Spleen (tissue), 13 donors: ENCODE measurements at regions of chr13 and their contacts with region 1.

Region 1: GRCh38 chr13:80363890-80364503 is 23.1 kb upstream of the SPRY2 start:
- DNase-seq: no peak
- H3K4me3 ChIP-seq: peak overlapping the region in 1 of 8 donors; percentile 13
- H3K27ac ChIP-seq: no peak overlapping the region
- H3K4me1 ChIP-seq: peaks cover 0 to 50% (median 27%) of the 10 kb centered on the region in 6 donors
- H3K27me3 ChIP-seq: no peaks in the 10 kb centered on the region
- CTCF ChIP-seq: peak; percentile 35 to 81 (median 68)
- POLR2A ChIP-seq: no peak

Region 2: GRCh38 chr13:79413521-79413920 is 950.5 kb before region 1 on chr13:
- intact Hi-C with region 1: no loop called
- DNase-seq: no peak
- H3K4me3 ChIP-seq: no peak overlapping the region
- H3K27ac ChIP-seq: no peak overlapping the region
- H3K4me1 ChIP-seq: no peaks in the 10 kb centered on the region
- H3K27me3 ChIP-seq: no peaks in the 10 kb centered on the region
- CTCF ChIP-seq: no peak
- POLR2A ChIP-seq: no peak

Region 3: GRCh38 chr13:79775830-79776229 is 588.2 kb before region 1 on chr13:
- intact Hi-C with region 1: loop called (anchors 10 kb)
- DNase-seq: no peak
- H3K4me3 ChIP-seq: no peak overlapping the region
- H3K27ac ChIP-seq: no peak overlapping the region
- H3K4me1 ChIP-seq: peaks cover 0 to 22% (median 2%) of the 10 kb centered on the region in 6 donors
- H3K27me3 ChIP-seq: no peaks in the 10 kb centered on the region
- CTCF ChIP-seq: peak in 8 of 11 experiments; percentile 31 to 69 (median 51)
- POLR2A ChIP-seq: no peak

Region 4: GRCh38 chr13:80196756-80197155 is 167.2 kb before region 1 on chr13:
- intact Hi-C with region 1: no loop called
- DNase-seq: no peak
- H3K4me3 ChIP-seq: no peak overlapping the region
- H3K27ac ChIP-seq: no peak overlapping the region
- H3K4me1 ChIP-seq: no peaks in the 10 kb centered on the region
- H3K27me3 ChIP-seq: no peaks in the 10 kb centered on the region
- CTCF ChIP-seq: no peak
- POLR2A ChIP-seq: no peak